WTC11 (cell line): ENCODE measurements at regions of chr5 and their contacts with region 1.

Region 1: GRCh38 chr5:59390074-59390659 is 503.4 kb downstream of the PDE4D start:
- DNase-seq: no peak
- ATAC-seq: no peak
- H3K4me3 Mint-ChIP-seq: no peak overlapping the region
- H3K27ac Mint-ChIP-seq: no peak overlapping the region
- H3K4me1 Mint-ChIP-seq: peaks cover 16% of the 10 kb centered on the region
- H3K27me3 Mint-ChIP-seq: no peaks in the 10 kb centered on the region
- CTCF ChIP-seq: peak; percentile 71

Region 2: GRCh38 chr5:59562756-59563389 is 172.7 kb after region 1 on chr5:
- CTCF ChIA-PET with region 1: no interaction called
- POLR2A ChIA-PET with region 1: no interaction called
- DNase-seq: peak; percentile 22
- ATAC-seq: peak; percentile 90
- H3K4me3 Mint-ChIP-seq: no peak overlapping the region
- H3K27ac Mint-ChIP-seq: peak overlapping the region; percentile 89
- H3K4me1 Mint-ChIP-seq: peaks cover 39% of the 10 kb centered on the region
- H3K27me3 Mint-ChIP-seq: no peaks in the 10 kb centered on the region
- CTCF ChIP-seq: no peak

Region 3: DNA sequence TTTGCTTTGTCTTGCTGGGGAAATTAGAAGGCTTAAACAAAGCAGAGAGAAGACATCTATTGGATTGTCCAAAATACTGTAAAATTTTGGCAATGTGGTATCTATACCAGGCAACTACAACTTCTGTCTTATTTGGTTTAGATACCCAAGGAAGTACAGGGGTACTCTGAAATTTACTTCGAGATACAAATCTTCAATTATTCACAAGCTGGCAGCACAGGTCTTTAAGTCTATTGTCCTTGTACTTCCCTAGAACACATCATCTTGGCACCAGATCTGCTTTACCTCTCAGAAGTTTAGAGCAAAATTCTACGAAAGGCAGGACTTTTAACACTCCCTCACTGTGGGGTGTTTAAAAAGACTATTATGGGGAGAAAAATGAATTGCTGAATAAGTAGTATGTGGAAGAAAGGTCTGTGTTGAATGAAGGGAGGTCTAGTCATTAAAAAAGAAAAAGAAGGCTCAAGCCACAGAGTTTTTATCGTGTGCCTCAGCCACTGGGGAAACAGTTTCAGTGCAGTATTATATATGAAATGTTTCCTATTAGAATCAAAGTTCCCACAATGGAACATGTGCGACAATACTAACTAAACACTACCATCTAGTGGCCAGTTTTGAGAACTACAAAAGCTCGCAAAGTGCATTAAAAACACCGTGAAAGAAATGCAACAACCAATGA is 409.6 kb after region 1 on chr5:
- CTCF ChIA-PET with region 1: interaction called, 17 read pairs
- POLR2A ChIA-PET with region 1: no interaction called
- DNase-seq: no peak
- ATAC-seq: peak; percentile 61
- H3K4me3 Mint-ChIP-seq: no peak overlapping the region
- H3K27ac Mint-ChIP-seq: no peak overlapping the region
- H3K4me1 Mint-ChIP-seq: peaks cover 15% of the 10 kb centered on the region
- H3K27me3 Mint-ChIP-seq: no peaks in the 10 kb centered on the region
- CTCF ChIP-seq: no peak; the same call in none of the 2 replicates